Dorsolateral prefrontal cortex (tissue), 120 donors: ENCODE measurements at regions of chr15 and their contacts with region 1.

Region 1: GRCh38 chr15:68672781-68673205 is 94.0 kb downstream of the CORO2B start:
- DNase-seq: peak in 3 of 10 donors; percentile 26 to 41 (median 38)
- H3K4me3 ChIP-seq: no peak overlapping the region
- H3K27ac ChIP-seq: peak overlapping the region in 15 of 59 donors; percentile 5 to 96 (median 38)
- H3K27me3 ChIP-seq: no peaks in the 10 kb centered on the region
- CTCF ChIP-seq: peak in 46 of 56 donors; percentile 16 to 70 (median 45)

Region 2: GRCh38 chr15:68550481-68551295 is 122.1 kb before region 1 on chr15:
- intact Hi-C with region 1: loop called in 1 of 2 experiments (anchors 2 kb)
- DNase-seq: peak; percentile 76 to 91 (median 84)
- H3K4me3 ChIP-seq: no peak overlapping the region
- H3K27ac ChIP-seq: no peak overlapping the region
- H3K27me3 ChIP-seq: no peaks in the 10 kb centered on the region
- CTCF ChIP-seq: peak; percentile 82 to 99 (median 97)

Region 3: GRCh38 chr15:68578174-68578979 is 94.4 kb before region 1 on chr15:
- intact Hi-C with region 1: loop called (anchors 1 to 5 kb)
- DNase-seq: peak; percentile 72 to 89 (median 80)
- H3K4me3 ChIP-seq: peak overlapping the region; percentile 54 to 89 (median 77)
- H3K27ac ChIP-seq: peak overlapping the region; percentile 65 to 98 (median 96)
- H3K27me3 ChIP-seq: no peaks in the 10 kb centered on the region
- CTCF ChIP-seq: peak in 55 of 56 donors; percentile 49 to 94 (median 74)

Region 4: DNA sequence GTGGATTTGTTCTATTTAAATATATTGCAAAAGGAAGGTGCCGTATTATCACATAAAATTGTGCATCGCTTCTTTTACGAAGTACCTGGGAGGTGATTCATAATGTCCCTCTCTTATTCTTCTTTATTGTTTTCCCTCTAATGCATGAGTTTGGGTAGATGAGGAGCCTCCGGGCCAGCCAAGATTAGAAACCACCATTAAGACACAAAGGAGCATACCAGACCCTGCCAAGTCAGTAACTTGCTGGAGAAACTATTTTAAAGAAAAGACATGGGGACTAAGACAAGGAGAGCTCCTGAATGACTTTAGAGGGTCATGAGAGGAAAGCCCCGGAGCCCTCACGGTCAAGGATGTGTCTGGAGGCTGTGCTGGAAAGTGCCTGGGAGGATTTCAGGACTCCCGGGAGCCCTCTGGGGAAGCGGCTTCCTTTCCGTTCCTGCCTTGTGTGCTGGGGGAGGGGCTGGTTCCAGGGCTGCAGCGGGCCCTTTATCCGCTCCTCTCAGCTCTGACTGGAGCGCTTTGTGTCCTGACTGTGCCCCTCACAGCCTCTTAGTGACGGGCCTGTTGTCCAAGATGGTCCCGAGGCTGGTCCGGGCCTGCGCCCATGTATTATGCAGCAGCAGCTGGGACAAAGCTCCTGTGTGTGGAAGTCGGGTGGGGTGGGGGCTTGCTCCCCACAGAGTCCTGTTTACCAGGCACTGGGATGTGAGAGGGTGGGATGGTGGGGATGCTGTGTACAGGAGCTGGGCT is 58.3 kb before region 1 on chr15:
- intact Hi-C with region 1: loop called in 1 of 2 experiments (anchors 5 kb)
- DNase-seq: peak; percentile 59 to 99 (median 96)
- H3K4me3 ChIP-seq: peak overlapping the region in 37 of 59 donors; percentile 1 to 49 (median 30)
- H3K27ac ChIP-seq: peak overlapping the region; percentile 87 to 100 (median 98)
- H3K27me3 ChIP-seq: no peaks in the 10 kb centered on the region
- CTCF ChIP-seq: peak in 15 of 56 donors; percentile 4 to 38 (median 19)

Region 5: DNA sequence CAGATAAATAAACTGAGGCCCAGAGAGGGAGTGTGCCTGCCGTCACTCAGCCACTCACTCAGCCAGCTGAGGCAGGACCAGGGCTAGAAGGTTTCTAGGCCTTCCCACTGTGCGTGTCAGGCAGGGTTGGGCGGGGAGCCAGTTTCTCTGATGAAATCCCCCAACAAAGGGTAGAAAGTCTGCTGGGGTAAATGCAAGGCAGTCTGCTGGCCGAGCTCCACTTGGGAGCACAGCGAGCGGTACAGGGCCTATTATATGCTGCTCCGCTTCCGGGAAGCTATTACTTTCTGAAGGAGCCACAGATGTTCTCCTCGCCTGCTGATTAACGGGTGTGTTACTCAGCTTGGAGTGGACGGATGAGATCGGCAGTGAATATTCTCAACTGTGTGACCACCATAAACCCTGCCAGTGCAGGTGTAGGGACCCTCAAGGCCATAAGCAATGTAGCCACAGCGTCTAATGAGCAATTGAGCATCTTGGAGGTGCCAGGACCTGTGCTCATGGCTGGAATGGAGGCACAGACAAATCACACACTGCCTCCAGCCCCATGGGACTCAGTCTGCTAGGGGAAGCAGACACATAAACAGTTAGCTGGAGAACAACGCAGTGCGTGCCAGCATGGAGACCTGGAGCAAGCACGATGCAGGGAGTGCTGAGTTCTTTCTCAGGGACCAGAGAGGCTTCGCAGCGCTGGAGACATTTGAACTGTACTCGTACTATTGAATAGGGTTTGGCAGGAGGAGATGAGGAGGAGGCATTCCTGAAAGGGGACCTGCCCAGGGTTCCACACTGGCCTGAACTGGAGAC is 51.9 kb before region 1 on chr15:
- intact Hi-C with region 1: loop called in 1 of 2 experiments (anchors 5 kb)
- DNase-seq: peak; percentile 72 to 93 (median 90)
- H3K4me3 ChIP-seq: peak overlapping the region in 23 of 59 donors; percentile 1 to 42 (median 24)
- H3K27ac ChIP-seq: peak overlapping the region; percentile 68 to 100 (median 98)
- H3K27me3 ChIP-seq: no peaks in the 10 kb centered on the region
- CTCF ChIP-seq: peak in 7 of 56 donors; percentile 11 to 27 (median 17)

Region 6: DNA sequence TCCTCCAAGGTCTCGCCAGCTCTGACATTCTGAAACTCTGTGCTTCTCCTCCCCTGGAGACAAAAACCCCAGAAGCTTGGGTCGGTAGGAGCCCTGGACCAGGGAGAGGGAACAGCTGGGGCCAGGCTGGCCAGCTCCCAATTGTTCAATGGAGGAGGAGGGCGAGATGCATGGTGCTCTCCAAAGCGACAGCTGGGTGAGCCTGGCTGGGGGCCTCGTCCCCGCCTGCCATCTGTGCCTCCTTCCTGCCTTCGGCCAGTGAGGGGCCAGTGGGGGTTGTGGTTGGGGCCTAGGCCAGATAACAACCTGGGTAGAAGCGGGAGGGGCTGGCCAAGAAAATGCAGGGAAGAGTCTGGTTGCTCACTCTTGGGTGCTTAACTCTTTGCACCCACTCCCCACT is 14.6 kb before region 1 on chr15:
- intact Hi-C with region 1: loop called in 1 of 2 experiments (anchors 2 kb)
- DNase-seq: peak; percentile 51 to 78 (median 67)
- H3K4me3 ChIP-seq: no peak overlapping the region
- H3K27ac ChIP-seq: peak overlapping the region in 53 of 59 donors; percentile 4 to 98 (median 72)
- H3K27me3 ChIP-seq: no peaks in the 10 kb centered on the region
- CTCF ChIP-seq: peak in 5 of 56 donors; percentile 5 to 20 (median 6)

Region 7: DNA sequence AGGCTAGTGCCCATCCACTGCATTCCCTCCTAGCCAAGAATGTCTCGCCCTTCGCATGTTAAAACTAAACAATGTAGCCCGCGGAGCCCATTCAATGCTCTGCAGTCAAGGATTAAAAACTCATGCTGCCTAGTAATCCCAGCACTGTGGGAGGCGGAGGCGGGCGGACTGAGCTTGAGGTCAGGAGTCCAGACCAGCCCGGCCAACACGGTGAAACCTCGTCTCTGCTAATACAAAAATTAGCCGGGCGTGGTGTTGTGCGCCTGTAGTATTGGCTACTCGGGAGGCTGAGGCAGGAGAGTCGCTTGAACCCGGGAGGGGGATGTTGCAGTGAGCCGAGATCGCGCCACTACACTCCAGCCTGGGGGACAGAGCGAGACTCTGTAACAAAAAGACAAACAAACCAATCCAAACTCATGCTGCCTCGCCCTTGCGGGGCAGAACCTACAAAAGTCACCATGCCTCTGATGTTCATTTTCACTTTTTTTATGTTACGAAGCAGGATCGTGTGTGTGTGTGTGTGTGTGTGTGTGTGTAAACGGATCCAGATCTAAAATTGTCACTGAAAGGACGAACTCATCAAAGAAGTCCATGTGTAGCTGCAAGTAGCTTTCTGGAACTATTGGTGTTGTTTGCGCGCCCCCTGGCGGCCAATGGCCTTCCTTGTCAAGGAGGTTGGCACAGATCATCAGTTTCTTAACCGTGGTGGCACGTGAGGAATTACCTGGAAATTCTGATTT is 202.8 kb after region 1 on chr15:
- intact Hi-C with region 1: no loop called
- DNase-seq: peak; percentile 90 to 96 (median 94)
- H3K4me3 ChIP-seq: peak overlapping the region; percentile 14 to 73 (median 51)
- H3K27ac ChIP-seq: peak overlapping the region in 2 of 59 donors; percentile 27 to 44
- H3K27me3 ChIP-seq: no peaks in the 10 kb centered on the region
- CTCF ChIP-seq: peak; percentile 78 to 96 (median 92)